ENCODE measurements at regions of chr12 and their contacts with region 1.

Region 1: GRCh38 chr12:42023733-42024494 is 120.8 kb downstream of the GXYLT1 start:
- DNase-seq: peak; percentile 49
- H3K4me3 Mint-ChIP-seq: peak overlapping the region; percentile 47
- H3K27ac Mint-ChIP-seq: no peak overlapping the region
- H3K4me1 Mint-ChIP-seq: peaks cover 8% of the 10 kb centered on the region
- H3K27me3 Mint-ChIP-seq: peaks cover 7% of the 10 kb centered on the region

Region 2: DNA sequence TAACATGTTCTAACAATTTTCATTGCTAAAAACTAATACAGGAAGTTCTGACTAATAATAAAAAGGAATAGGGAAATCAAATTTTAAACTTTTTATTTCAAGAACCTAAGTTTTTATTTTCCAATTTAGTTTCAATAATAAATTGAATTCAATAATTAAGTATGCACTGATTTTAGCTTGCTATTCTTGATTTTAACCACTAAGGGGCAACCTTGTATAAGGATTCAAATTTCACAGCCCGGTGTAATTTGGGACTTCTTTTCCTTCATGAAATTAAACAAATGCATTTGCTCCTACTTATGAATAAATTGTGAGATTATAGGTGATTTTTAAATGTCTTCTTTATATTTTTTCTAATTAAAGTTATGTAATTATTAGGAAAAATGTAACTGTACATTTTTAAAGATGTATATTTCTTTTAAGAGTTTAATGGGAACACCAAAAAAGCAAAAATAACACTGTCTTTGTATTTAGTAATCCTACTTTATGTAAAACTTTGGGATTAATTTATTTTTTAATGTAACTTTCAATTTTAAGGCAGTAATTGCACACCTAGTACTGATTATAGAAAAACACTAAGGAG is 1077.2 kb before region 1 on chr12:
- intact Hi-C with region 1: loop called (anchors 2 kb)
- DNase-seq: no peak
- H3K4me3 Mint-ChIP-seq: no peak overlapping the region
- H3K27ac Mint-ChIP-seq: no peak overlapping the region
- H3K4me1 Mint-ChIP-seq: no peaks in the 10 kb centered on the region
- H3K27me3 Mint-ChIP-seq: no peaks in the 10 kb centered on the region

Region 3: GRCh38 chr12:41277116-41277945 is 746.6 kb before region 1 on chr12:
- intact Hi-C with region 1: loop called (anchors 2 kb)
- DNase-seq: no peak
- H3K4me3 Mint-ChIP-seq: no peak overlapping the region
- H3K27ac Mint-ChIP-seq: no peak overlapping the region
- H3K4me1 Mint-ChIP-seq: no peaks in the 10 kb centered on the region
- H3K27me3 Mint-ChIP-seq: no peaks in the 10 kb centered on the region

Region 4: DNA sequence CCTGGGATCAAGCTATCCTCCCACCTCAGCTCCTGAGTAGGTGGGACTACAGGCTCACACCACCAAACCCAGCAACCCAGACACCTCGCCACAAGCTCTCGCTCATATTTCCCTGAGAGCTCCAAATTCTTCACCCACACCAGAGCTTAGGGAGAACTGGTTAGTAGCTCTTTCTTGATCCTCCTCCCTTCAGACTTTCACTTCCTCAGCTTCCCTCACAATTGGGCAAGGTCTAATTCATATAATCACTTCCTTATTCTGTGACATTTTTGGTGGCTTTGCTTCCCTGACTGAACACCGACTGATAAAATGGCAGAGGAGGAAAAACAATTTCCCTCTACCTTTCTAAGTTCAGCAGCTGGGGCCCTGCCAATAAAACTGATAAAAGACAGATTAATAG is 32.2 kb after region 1 on chr12:
- intact Hi-C with region 1: no loop called
- DNase-seq: no peak
- H3K4me3 Mint-ChIP-seq: no peak overlapping the region
- H3K27ac Mint-ChIP-seq: no peak overlapping the region
- H3K4me1 Mint-ChIP-seq: no peaks in the 10 kb centered on the region
- H3K27me3 Mint-ChIP-seq: peaks cover 17% of the 10 kb centered on the region

Region 5: GRCh38 chr12:42308390-42308789 is 284.5 kb after region 1 on chr12:
- intact Hi-C with region 1: no loop called
- DNase-seq: no peak
- H3K4me3 Mint-ChIP-seq: no peak overlapping the region
- H3K27ac Mint-ChIP-seq: no peak overlapping the region
- H3K4me1 Mint-ChIP-seq: no peaks in the 10 kb centered on the region
- H3K27me3 Mint-ChIP-seq: no peaks in the 10 kb centered on the region

Region 6: GRCh38 chr12:42332301-42333285 is 308.7 kb after region 1 on chr12:
- intact Hi-C with region 1: loop called (anchors 10 kb)
- DNase-seq: no peak
- H3K4me3 Mint-ChIP-seq: no peak overlapping the region
- H3K27ac Mint-ChIP-seq: no peak overlapping the region
- H3K4me1 Mint-ChIP-seq: peaks cover 41% of the 10 kb centered on the region
- H3K27me3 Mint-ChIP-seq: no peaks in the 10 kb centered on the region

Region 7: DNA sequence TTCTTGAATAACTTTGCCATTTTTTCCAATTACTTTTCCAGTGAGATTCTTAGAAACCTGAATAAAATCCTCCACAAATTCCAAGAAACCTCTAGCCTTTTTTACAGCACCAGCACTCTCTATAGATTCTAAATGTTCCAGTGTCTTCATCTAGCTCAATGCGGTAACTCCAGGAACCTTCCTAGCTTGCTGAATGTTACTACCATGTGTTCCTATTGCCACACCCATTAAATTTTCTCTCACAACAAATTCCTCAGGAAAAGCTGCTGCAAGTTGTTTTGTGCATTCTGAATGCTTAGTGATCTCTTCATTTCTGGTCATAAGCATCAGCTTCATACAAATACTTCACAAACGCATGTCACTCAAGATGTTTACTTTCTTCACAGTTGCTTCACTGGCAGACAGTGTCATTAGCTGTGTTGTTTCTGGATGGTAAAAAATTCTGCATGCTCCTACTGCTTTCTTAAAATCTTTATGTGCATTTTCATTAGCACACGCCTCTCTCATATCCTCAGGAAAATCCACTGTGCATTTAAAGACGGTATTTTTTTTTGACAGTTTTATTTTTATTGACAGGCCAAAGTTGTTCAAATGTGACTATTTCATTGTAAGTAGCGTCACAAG is 408.7 kb after region 1 on chr12:
- intact Hi-C with region 1: no loop called
- DNase-seq: no peak
- H3K4me3 Mint-ChIP-seq: no peak overlapping the region
- H3K27ac Mint-ChIP-seq: no peak overlapping the region
- H3K4me1 Mint-ChIP-seq: no peaks in the 10 kb centered on the region
- H3K27me3 Mint-ChIP-seq: no peaks in the 10 kb centered on the region